Colonic mucosa (tissue), 4 donors: ENCODE measurements at regions of chr1 and their contacts with region 1.

Region 1: DNA sequence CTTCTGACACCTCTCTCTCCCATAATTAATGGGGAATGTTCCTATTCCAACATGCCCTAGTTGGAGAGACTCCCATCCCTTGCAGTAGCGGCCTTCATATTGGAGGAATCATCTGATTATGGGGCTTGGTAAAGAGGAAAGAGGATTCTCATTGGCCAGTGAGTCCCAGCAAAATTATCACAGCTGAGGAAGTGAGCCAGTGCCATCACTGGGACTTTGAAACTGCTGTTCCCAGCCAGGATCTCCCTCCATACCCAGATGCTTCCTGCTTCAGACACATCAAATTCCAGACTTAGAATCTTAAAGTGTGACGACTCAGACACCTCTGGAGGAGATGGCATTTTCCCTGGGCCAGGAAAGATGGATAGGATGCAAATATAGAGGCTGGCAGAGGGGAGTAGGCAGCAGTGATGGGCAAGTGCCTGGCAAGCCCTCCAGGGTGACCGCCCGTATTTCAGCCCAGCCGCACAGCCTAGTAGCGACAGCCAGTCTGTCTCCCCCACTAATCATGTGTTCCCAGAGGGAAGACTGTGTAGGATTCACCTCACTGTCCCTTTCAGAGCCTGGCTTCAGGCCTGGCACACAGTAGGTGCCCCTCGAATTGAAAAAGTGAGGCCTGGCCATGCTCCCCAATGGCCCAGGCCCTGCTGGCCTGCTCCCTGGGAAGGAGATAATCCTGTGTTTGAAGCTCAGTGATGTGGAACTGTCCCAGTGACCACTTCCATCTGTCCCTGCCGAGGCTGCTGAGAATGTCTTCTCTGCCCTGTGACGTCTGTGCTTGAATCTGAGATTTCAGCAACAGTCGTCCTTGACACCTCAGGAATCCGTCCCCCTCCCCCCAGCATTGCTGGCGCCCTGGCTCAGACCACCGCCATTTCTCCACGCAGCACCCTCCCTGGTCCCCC is 41.2 kb upstream of the MAGOH start:
- DNase-seq: no peak
- H3K4me3 ChIP-seq: no peak overlapping the region
- H3K27ac ChIP-seq: no peak overlapping the region
- H3K4me1 ChIP-seq: no peaks in the 10 kb centered on the region
- H3K27me3 ChIP-seq: no peaks in the 10 kb centered on the region
- CTCF ChIP-seq: no peak

Region 2: DNA sequence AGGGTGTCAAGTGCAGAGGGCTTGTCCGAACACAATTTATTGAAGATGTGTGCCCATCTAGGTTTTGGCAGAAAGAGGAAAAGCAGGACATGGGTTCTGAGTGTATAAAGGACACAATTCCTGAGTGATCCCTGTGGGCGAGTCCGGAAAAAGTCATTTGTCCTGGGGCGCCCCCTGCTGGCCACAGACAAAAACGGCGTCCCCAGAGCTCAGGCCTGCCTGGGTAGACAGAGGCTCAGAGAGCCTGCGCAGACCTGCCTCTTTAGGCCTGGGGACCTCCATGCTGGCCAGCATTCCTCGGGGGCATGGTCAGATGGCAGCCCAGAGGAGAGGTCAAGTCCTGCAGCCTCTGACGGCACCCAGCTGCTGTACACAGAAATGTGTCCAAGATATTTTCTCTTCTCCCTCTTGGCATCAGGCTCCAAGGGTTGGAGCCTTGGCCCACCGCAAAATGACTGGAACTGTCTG is 113.8 kb after region 1 on chr1:
- intact Hi-C with region 1: loop called (anchors 1 kb)
- DNase-seq: peak; percentile 82
- H3K4me3 ChIP-seq: no peak overlapping the region
- H3K27ac ChIP-seq: no peak overlapping the region
- H3K4me1 ChIP-seq: no peaks in the 10 kb centered on the region
- H3K27me3 ChIP-seq: no peaks in the 10 kb centered on the region
- CTCF ChIP-seq: peak; percentile 94